Activated T-helper 1 cell treated with anti-CD3 and anti-CD28 coated beads, Interleukin-12 subunit alpha, Interleukin-12 subunit beta, Interleukin-2, Interleukin-4 antibody, amounts not matched to agents 30 ng/mL and 10 ng/mL and 1 ng/mL, durations not matched to agents 14 hours and 24 hours and 36 hours (primary cell): ENCODE measurements at regions of chr20 and their contacts with region 1.

Region 1: DNA sequence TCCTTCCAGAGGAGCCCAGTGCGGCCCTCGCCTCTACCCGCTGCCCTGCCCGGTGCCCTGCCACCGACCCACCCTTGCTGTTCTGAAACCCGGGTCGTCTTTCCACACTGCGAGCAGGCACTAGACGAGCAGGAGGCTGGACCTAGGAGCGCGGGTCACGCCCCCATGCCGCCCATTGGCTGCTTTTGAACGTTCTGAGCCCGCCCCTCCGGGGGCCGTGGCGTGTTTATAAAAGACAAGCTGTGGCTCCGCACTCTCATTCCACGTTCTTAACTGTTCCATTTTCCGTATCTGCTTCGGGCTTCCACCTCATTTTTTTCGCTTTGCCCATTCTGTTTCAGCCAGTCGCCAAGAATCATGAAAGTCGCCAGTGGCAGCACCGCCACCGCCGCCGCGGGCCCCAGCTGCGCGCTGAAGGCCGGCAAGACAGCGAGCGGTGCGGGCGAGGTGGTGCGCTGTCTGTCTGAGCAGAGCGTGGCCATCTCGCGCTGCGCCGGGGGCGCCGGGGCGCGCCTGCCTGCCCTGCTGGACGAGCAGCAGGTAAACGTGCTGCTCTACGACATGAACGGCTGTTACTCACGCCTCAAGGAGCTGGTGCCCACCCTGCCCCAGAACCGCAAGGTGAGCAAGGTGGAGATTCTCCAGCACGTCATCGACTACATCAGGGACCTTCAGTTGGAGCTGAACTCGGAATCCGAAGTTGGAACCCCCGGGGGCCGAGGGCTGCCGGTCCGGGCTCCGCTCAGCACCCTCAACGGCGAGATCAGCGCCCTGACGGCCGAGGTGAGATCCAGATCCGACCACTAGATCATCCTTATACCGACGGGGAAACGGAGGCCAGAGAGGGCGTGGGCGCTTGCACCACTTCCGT is at the start of gene ID1:
- DNase-seq: peak; percentile 87
- H3K4me3 Mint-ChIP-seq: peak within 1 kb of the TSS; percentile 91
- H3K27ac Mint-ChIP-seq: peak within 1 kb of the TSS; percentile 65
- H3K4me1 Mint-ChIP-seq: peaks cover 35% of the 10 kb centered on the region
- H3K27me3 Mint-ChIP-seq: peaks cover 54% of the 10 kb centered on the region
- total RNA-seq, gene ID1: 3.4 and 4.0 TPM in 2 replicates

Region 2: DNA sequence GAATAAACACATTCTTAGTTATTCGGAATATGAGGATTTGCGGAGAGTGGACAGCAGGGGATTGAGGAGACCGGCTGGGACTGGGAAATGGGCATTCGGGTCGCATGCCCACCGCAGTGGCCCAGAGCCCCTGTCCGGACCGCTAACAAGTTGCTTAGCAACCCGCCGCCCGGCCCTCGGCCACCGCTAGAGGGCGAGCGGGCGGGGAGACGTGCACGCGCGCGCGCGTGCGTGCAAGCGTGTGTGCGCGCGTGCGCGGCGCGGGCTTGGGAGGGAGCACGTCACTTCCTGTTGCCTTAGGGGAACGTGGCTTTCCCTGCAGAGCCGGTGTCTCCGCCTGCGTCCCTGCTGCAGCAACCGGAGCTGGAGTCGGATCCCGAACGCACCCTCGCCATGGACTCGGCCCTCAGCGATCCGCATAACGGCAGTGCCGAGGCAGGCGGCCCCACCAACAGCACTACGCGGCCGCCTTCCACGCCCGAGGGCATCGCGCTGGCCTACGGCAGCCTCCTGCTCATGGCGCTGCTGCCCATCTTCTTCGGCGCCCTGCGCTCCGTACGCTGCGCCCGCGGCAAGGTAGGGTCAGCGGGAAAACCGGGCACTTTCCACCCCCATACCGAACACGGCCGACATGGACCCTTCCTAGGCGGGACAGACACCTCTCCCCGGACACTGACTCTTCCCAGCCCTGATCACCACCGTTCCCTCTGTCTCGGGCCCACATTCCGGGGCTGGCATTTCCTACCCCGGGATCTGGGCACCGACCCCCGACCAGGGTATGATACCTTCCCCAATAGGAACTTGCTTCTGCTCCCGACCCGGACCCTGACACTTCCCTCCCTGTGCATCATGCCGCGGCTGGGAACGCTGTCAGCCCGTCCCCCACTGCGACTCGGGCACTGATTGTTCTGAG is 90.9 kb before region 1 on chr20 and contains the start of gene HM13:
- intact Hi-C with region 1: loop called (anchors 2 kb)
- DNase-seq: peak; percentile 86
- H3K4me3 Mint-ChIP-seq: peak within 1 kb of the TSS; percentile 48
- H3K27ac Mint-ChIP-seq: peak within 1 kb of the TSS; percentile 24
- H3K4me1 Mint-ChIP-seq: peaks cover 7% of the 10 kb centered on the region
- H3K27me3 Mint-ChIP-seq: peaks cover 2% of the 10 kb centered on the region
- total RNA-seq, gene HM13: 215 and 228 TPM in 2 replicates

Region 3: GRCh38 chr20:31560094-31560899 is 45.0 kb before region 1 on chr20:
- intact Hi-C with region 1: loop called (anchors 2 kb)
- DNase-seq: peak; percentile 59
- H3K4me3 Mint-ChIP-seq: no peak overlapping the region
- H3K27ac Mint-ChIP-seq: peak overlapping the region; percentile 74
- H3K4me1 Mint-ChIP-seq: peaks cover 25% of the 10 kb centered on the region
- H3K27me3 Mint-ChIP-seq: no peaks in the 10 kb centered on the region

Region 4: GRCh38 chr20:31572701-31573554 is 32.3 kb before region 1 on chr20:
- intact Hi-C with region 1: loop called (anchors 1 kb)
- DNase-seq: peak; percentile 80
- H3K4me3 Mint-ChIP-seq: peak overlapping the region; percentile 88
- H3K27ac Mint-ChIP-seq: peak overlapping the region; percentile 88
- H3K4me1 Mint-ChIP-seq: peaks cover 20% of the 10 kb centered on the region
- H3K27me3 Mint-ChIP-seq: no peaks in the 10 kb centered on the region

Region 5: GRCh38 chr20:31587545-31588389 is 17.5 kb before region 1 on chr20:
- intact Hi-C with region 1: loop called (anchors 1 kb)
- DNase-seq: no peak
- H3K4me3 Mint-ChIP-seq: peak overlapping the region; percentile 69
- H3K27ac Mint-ChIP-seq: no peak overlapping the region
- H3K4me1 Mint-ChIP-seq: peaks cover 8% of the 10 kb centered on the region
- H3K27me3 Mint-ChIP-seq: peaks cover 36% of the 10 kb centered on the region